K562 (cell line): ENCODE measurements at regions of chr13 and their contacts with region 1.

Region 1: GRCh38 chr13:42333613-42334328 is 61.8 kb downstream of the AKAP11 start:
- DNase-seq: peak in 2 of 4 experiments; percentile 11 to 17
- ATAC-seq: peak; percentile 89
- H3K4me3 ChIP-seq: no peak overlapping the region
- H3K27ac ChIP-seq: no peak overlapping the region
- H3K4me1 ChIP-seq: no peaks in the 10 kb centered on the region; a peak in 1 of 5 replicates
- H3K27me3 ChIP-seq: peaks cover 5 to 6% of the 10 kb centered on the region in 2 experiments
- CTCF ChIP-seq: peak; percentile 30 to 54 (median 50); a peak in 4 of 6 replicates
- EP300 ChIP-seq: no peak
- POLR2A ChIP-seq: no peak
- RAD21 ChIP-seq: peak in 1 of 2 experiments; percentile 67; a peak in 3 of 4 replicates

Region 2: DNA sequence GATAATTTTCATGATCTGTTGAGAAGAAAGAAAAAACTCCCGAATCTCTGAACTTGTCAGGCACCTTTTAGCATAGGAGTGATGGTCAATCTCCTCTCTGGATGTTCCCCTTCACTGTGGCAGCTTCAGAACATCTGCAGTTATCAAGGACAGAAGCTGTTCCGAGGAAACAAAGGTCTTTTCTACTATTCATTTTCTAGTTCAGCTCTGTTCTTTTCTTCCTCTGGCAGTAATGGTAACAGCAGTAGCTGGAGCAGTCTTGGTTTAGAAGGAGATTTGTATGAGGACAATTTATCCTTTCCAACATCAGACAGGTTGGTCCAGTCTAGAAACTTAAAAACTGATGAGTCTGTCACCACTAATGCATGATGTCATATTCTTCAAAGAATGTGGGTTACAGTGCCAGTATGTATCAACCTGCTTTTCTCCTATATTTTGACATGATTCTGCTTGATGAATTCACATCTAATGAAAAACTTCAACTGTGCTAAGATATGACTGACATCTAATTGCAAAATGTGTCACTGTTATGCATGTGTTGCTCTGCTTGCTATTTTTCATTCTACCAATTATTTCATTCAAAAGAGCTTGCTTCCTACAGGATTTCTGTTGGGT is 20.8 kb before region 1 on chr13:
- CTCF ChIA-PET with region 1: no interaction called
- POLR2A ChIA-PET with region 1: no interaction called
- in situ Hi-C with region 1: no loop called
- intact Hi-C with region 1: no loop called
- DNase-seq: no peak
- ATAC-seq: no peak
- H3K4me3 ChIP-seq: no peak overlapping the region
- H3K27ac ChIP-seq: no peak overlapping the region
- H3K4me1 ChIP-seq: no peaks in the 10 kb centered on the region
- H3K27me3 ChIP-seq: no peaks in the 10 kb centered on the region
- CTCF ChIP-seq: no peak
- EP300 ChIP-seq: no peak
- POLR2A ChIP-seq: no peak
- RAD21 ChIP-seq: no peak

Region 3: GRCh38 chr13:42420304-42420703 is 86.5 kb after region 1 on chr13:
- CTCF ChIA-PET with region 1: no interaction called
- POLR2A ChIA-PET with region 1: no interaction called
- in situ Hi-C with region 1: no loop called
- intact Hi-C with region 1: no loop called
- DNase-seq: no peak
- ATAC-seq: no peak
- H3K4me3 ChIP-seq: no peak overlapping the region
- H3K27ac ChIP-seq: no peak overlapping the region
- H3K4me1 ChIP-seq: no peaks in the 10 kb centered on the region
- H3K27me3 ChIP-seq: no peaks in the 10 kb centered on the region
- CTCF ChIP-seq: no peak
- EP300 ChIP-seq: no peak
- POLR2A ChIP-seq: no peak
- RAD21 ChIP-seq: no peak

Region 4: DNA sequence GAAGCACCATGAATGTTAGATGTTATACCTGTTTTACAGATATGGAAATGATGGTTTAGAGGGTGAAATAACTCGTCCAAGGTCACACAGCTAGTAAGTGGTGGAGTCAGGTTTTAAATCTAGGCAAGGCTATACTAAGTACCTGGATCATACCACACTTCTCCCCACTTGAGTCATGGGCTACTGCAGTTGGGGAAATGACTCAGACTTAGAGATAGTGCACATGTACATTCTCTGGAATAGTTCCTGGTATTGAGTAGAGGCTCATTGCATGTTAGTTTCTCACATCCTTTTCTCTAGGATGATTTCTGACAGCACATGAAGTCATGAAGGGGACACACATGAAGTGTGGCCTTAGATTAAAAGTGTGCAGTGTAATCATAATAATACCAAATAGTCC is 164.0 kb after region 1 on chr13:
- CTCF ChIA-PET with region 1: no interaction called
- POLR2A ChIA-PET with region 1: no interaction called
- in situ Hi-C with region 1: no loop called
- intact Hi-C with region 1: loop called (anchors 10 kb)
- DNase-seq: no peak
- ATAC-seq: no peak
- H3K4me3 ChIP-seq: no peak overlapping the region
- H3K27ac ChIP-seq: no peak overlapping the region
- H3K4me1 ChIP-seq: no peaks in the 10 kb centered on the region; a peak in 1 of 5 replicates
- H3K27me3 ChIP-seq: no peaks in the 10 kb centered on the region
- CTCF ChIP-seq: no peak
- EP300 ChIP-seq: no peak
- POLR2A ChIP-seq: no peak
- RAD21 ChIP-seq: no peak

Region 5: DNA sequence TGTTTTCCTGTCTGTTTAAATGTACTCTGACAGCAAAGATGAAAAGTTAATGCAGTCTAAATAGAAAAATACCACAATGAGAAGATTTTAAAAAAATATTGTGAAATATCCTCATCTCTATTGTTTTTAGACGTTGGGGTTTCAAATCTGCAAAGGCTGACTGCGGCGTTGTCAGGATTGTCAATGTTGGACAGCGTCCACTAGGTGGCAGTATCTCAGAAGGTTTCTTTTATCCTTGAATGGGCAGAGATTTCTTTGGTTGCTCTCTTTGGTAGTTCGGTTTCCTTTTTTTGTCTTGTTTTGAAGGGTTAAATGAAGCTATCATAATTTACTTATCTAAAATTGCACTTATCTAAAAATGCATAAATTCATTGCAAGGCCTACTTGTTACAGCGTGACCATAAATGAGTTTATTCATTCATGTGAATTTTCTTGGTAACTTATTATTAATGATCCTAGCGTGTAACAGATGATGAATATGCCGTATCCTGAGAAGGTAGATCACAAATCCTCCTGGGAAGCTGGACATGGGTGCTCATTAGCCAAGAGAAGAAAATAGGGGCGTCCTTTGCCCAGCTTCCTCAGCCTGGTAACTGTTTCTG is 261.3 kb after region 1 on chr13:
- CTCF ChIA-PET with region 1: no interaction called
- POLR2A ChIA-PET with region 1: no interaction called
- in situ Hi-C with region 1: no loop called
- intact Hi-C with region 1: loop called (anchors 1 kb)
- DNase-seq: peak; percentile 51 to 61 (median 56)
- ATAC-seq: peak; percentile 65; the same call in 2 of the 3 replicates
- H3K4me3 ChIP-seq: no peak overlapping the region
- H3K27ac ChIP-seq: no peak overlapping the region
- H3K4me1 ChIP-seq: no peaks in the 10 kb centered on the region
- H3K27me3 ChIP-seq: no peaks in the 10 kb centered on the region
- CTCF ChIP-seq: peak; percentile 49 to 66 (median 61); a peak in 5 of 6 replicates
- EP300 ChIP-seq: no peak
- POLR2A ChIP-seq: no peak
- RAD21 ChIP-seq: peak; percentile 42 to 69

Region 6: GRCh38 chr13:42649831-42650230 is 316.1 kb after region 1 on chr13:
- CTCF ChIA-PET with region 1: no interaction called
- POLR2A ChIA-PET with region 1: no interaction called
- in situ Hi-C with region 1: no loop called
- intact Hi-C with region 1: no loop called
- DNase-seq: no peak
- ATAC-seq: no peak
- H3K4me3 ChIP-seq: no peak overlapping the region
- H3K27ac ChIP-seq: no peak overlapping the region
- H3K4me1 ChIP-seq: no peaks in the 10 kb centered on the region
- H3K27me3 ChIP-seq: no peaks in the 10 kb centered on the region; a peak in 1 of 5 replicates
- CTCF ChIP-seq: no peak
- EP300 ChIP-seq: no peak
- POLR2A ChIP-seq: no peak
- RAD21 ChIP-seq: no peak